ENCODE measurements at regions of chr2 and their contacts with region 1.

Region 1: GRCh38 chr2:86396291-86396785 is 44.8 kb upstream of the KDM3A start:
- DNase-seq: no peak
- H3K4me3 ChIP-seq: no peak overlapping the region
- H3K27ac ChIP-seq: no peak overlapping the region
- H3K4me1 ChIP-seq: no peaks in the 10 kb centered on the region
- H3K27me3 ChIP-seq: no peaks in the 10 kb centered on the region; a peak in 1 of 7 replicates
- CTCF ChIP-seq: peak; percentile 21 to 57 (median 50)
- EP300 ChIP-seq: no peak
- POLR2A ChIP-seq: no peak
- RAD21 ChIP-seq: peak; percentile 67 to 77

Region 2: GRCh38 chr2:86003967-86004366 is 392.4 kb before region 1 on chr2:
- CTCF ChIA-PET with region 1: no interaction called
- POLR2A ChIA-PET with region 1: no interaction called
- DNase-seq: no peak
- H3K4me3 ChIP-seq: no peak overlapping the region
- H3K27ac ChIP-seq: no peak overlapping the region
- H3K4me1 ChIP-seq: no peaks in the 10 kb centered on the region
- H3K27me3 ChIP-seq: no peaks in the 10 kb centered on the region
- CTCF ChIP-seq: no peak
- EP300 ChIP-seq: no peak
- POLR2A ChIP-seq: no peak
- RAD21 ChIP-seq: no peak

Region 3: DNA sequence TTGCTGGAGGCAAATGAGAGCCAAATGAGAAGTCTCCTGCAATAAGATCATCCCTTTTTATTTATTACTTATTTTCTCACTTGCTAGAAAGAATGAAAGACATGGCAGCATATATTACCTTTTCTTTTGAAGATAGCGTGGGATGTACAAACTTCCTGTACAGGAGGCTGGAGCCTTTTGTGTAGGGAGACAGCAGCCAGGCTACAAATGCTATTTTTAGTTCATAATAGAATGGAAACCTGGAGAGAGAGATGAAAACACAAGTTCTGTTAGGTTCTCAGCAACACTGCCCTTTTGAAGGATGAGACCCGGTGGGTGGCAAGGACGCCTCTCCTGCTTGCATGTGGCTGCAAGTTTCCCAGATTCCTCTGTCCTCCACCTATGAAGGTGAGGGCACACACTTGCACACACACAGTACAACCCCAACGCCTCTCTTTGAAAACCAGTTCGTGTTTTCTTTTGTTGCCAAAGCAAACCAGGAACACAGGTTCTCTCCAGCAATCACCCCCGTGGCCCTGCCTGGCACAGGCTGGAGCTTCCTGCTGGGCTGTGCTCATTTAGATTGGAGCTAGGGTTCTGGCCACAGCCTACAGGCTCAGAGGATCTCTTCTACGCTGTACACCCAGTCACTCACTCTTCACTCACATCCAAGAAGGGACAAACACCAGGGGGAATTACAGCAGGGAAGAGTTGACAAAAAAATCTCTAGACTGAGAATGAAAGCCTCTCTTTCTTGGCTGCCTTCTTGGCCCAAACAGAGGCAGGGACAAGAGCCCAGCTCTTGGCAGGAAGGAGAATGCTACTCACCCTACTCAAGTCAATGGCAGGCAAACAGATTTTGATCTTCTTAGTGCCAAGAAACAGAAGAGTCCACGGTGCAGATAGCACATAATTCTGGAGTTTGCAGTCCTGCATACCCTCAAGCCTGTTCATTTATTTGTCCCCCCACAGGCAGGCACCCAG is 141.5 kb before region 1 on chr2:
- CTCF ChIA-PET with region 1: no interaction called
- POLR2A ChIA-PET with region 1: no interaction called
- DNase-seq: no peak
- H3K4me3 ChIP-seq: no peak overlapping the region
- H3K27ac ChIP-seq: no peak overlapping the region
- H3K4me1 ChIP-seq: peaks cover 0 to 7% (median 4%) of the 10 kb centered on the region in 4 experiments; a peak in 3 of 7 replicates
- H3K27me3 ChIP-seq: no peaks in the 10 kb centered on the region
- CTCF ChIP-seq: no peak
- EP300 ChIP-seq: no peak
- POLR2A ChIP-seq: no peak
- RAD21 ChIP-seq: no peak

Region 4: GRCh38 chr2:86383844-86384243 is 12.5 kb before region 1 on chr2:
- CTCF ChIA-PET with region 1: interaction called, 14 read pairs
- POLR2A ChIA-PET with region 1: no interaction called
- DNase-seq: no peak
- H3K4me3 ChIP-seq: no peak overlapping the region
- H3K27ac ChIP-seq: no peak overlapping the region
- H3K4me1 ChIP-seq: no peaks in the 10 kb centered on the region
- H3K27me3 ChIP-seq: no peaks in the 10 kb centered on the region
- CTCF ChIP-seq: no peak
- EP300 ChIP-seq: no peak
- POLR2A ChIP-seq: no peak
- RAD21 ChIP-seq: no peak

Region 5: GRCh38 chr2:86414996-86415395 is 18.7 kb after region 1 on chr2:
- CTCF ChIA-PET with region 1: interaction called, 10 read pairs
- POLR2A ChIA-PET with region 1: no interaction called
- DNase-seq: no peak
- H3K4me3 ChIP-seq: no peak overlapping the region
- H3K27ac ChIP-seq: no peak overlapping the region
- H3K4me1 ChIP-seq: peaks cover 0 to 2% (median 0%) of the 10 kb centered on the region in 4 experiments; a peak in 1 of 7 replicates
- H3K27me3 ChIP-seq: no peaks in the 10 kb centered on the region
- CTCF ChIP-seq: no peak
- EP300 ChIP-seq: no peak
- POLR2A ChIP-seq: no peak
- RAD21 ChIP-seq: no peak